ENCODE measurements at regions of chr19 and their contacts with region 1.

Region 1: GRCh38 chr19:1652471-1653299 is at the start of gene TCF3:
- DNase-seq: peak; percentile 99
- ATAC-seq: peak; percentile 94
- H3K4me3 Mint-ChIP-seq: peak within 1 kb of the TSS; percentile 88
- H3K27ac Mint-ChIP-seq: peak within 1 kb of the TSS; percentile 91
- H3K4me1 Mint-ChIP-seq: peaks cover 32% of the 10 kb centered on the region
- H3K27me3 Mint-ChIP-seq: no peaks in the 10 kb centered on the region
- total RNA-seq, gene TCF3: 115 to 133 TPM

Region 2: GRCh38 chr19:1355568-1356507 is 296.8 kb before region 1 on chr19:
- CTCF ChIA-PET with region 1: no interaction called
- POLR2A ChIA-PET with region 1: no interaction called
- intact Hi-C with region 1: loop called in 1 of 2 experiments (anchors 1 kb)
- DNase-seq: peak; percentile 51
- ATAC-seq: no peak
- H3K4me3 Mint-ChIP-seq: peak overlapping the region; percentile 77
- H3K27ac Mint-ChIP-seq: peak overlapping the region; percentile 49
- H3K4me1 Mint-ChIP-seq: peaks cover 9% of the 10 kb centered on the region
- H3K27me3 Mint-ChIP-seq: no peaks in the 10 kb centered on the region

Region 3: DNA sequence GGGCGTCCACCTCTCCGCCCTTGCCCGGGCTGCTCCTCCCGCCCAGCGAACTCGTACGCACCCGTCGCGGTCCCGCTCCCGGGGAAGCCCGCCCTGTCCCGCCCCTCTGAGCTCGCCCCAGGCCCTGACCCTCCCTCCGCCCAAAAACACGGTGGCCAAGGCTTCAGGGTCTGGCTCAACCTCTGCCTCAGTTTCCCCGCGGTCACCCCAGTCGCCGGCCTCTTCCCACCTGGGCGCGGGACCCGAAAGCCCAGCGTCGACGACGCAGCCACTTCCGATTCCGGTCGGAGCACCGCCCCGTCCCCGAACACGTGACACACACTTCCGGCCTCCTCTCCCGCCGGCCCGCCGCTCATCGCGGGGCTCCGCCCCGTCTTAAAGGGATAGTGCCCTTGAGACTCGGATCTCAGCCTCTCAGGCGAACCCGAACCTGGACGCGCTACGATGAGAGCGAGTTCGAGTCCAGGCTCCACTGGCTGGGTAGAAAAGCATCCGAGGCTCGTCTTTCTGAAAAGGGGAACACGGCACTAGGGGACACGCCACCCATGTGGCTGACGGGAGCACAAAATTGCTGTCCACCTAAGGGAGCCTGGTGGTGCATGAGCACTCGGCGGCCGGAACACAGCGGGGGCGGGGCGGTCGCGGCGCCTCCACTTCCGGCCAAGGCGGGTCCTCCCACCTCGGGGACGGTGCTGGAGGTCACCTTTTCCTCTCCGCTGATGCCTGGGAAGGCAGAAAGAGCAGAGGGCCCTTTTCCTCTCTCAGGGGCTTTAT is 173.6 kb before region 1 on chr19 and contains the start of gene C19orf25:
- CTCF ChIA-PET with region 1: no interaction called
- POLR2A ChIA-PET with region 1: no interaction called
- intact Hi-C with region 1: loop called in 1 of 2 experiments (anchors 1 kb)
- DNase-seq: peak; percentile 97
- ATAC-seq: peak; percentile 98
- H3K4me3 Mint-ChIP-seq: peak within 1 kb of the TSS; percentile 96
- H3K27ac Mint-ChIP-seq: peak within 1 kb of the TSS; percentile 95
- H3K4me1 Mint-ChIP-seq: peaks cover 6% of the 10 kb centered on the region
- H3K27me3 Mint-ChIP-seq: no peaks in the 10 kb centered on the region
- total RNA-seq, gene C19orf25: 19.9 to 26.9 TPM

Region 4: GRCh38 chr19:1592755-1593500 is 59.8 kb before region 1 on chr19 and contains the start of gene MBD3:
- CTCF ChIA-PET with region 1: no interaction called
- POLR2A ChIA-PET with region 1: interaction called, 7 read pairs
- intact Hi-C with region 1: loop called (anchors 1 to 5 kb)
- DNase-seq: peak; percentile 93
- ATAC-seq: peak; percentile 85
- H3K4me3 Mint-ChIP-seq: peak within 1 kb of the TSS; percentile 94
- H3K27ac Mint-ChIP-seq: peak within 1 kb of the TSS; percentile 93
- H3K4me1 Mint-ChIP-seq: peaks cover 20% of the 10 kb centered on the region
- H3K27me3 Mint-ChIP-seq: no peaks in the 10 kb centered on the region
- total RNA-seq, gene MBD3: 68.9 to 87.5 TPM

Region 5: GRCh38 chr19:1672038-1672768 is 19.5 kb after region 1 on chr19:
- CTCF ChIA-PET with region 1: interaction called, 6 read pairs
- POLR2A ChIA-PET with region 1: no interaction called
- intact Hi-C with region 1: loop called in 1 of 2 experiments (anchors 1 kb)
- DNase-seq: peak; percentile 78
- ATAC-seq: peak; percentile 64
- H3K4me3 Mint-ChIP-seq: no peak overlapping the region
- H3K27ac Mint-ChIP-seq: no peak overlapping the region
- H3K4me1 Mint-ChIP-seq: peaks cover 13% of the 10 kb centered on the region
- H3K27me3 Mint-ChIP-seq: peaks cover 46% of the 10 kb centered on the region

Region 6: DNA sequence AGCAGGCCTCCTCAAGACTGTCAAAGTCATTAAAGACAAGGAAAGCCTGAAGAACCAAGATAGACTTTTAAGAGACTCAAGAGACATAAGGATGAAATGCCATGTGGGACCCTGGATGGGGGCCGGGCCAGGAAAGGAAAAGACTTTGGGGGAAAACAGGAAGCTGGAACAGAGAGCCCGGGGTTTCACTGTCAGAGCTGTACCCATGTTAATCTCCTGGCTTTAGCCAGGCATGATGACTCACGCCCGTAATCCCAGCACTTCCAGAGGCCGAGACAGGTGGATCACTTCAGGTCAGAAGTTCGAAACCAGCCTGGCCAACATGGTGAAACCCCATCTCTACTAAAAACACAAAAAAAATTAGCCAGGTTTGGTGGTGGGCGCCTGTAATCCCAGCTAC is 216.3 kb after region 1 on chr19:
- CTCF ChIA-PET with region 1: no interaction called
- POLR2A ChIA-PET with region 1: no interaction called
- intact Hi-C with region 1: no loop called
- DNase-seq: no peak
- ATAC-seq: no peak
- H3K4me3 Mint-ChIP-seq: no peak overlapping the region
- H3K27ac Mint-ChIP-seq: peak overlapping the region; percentile 29
- H3K4me1 Mint-ChIP-seq: peaks cover 24% of the 10 kb centered on the region
- H3K27me3 Mint-ChIP-seq: no peaks in the 10 kb centered on the region

Region 7: DNA sequence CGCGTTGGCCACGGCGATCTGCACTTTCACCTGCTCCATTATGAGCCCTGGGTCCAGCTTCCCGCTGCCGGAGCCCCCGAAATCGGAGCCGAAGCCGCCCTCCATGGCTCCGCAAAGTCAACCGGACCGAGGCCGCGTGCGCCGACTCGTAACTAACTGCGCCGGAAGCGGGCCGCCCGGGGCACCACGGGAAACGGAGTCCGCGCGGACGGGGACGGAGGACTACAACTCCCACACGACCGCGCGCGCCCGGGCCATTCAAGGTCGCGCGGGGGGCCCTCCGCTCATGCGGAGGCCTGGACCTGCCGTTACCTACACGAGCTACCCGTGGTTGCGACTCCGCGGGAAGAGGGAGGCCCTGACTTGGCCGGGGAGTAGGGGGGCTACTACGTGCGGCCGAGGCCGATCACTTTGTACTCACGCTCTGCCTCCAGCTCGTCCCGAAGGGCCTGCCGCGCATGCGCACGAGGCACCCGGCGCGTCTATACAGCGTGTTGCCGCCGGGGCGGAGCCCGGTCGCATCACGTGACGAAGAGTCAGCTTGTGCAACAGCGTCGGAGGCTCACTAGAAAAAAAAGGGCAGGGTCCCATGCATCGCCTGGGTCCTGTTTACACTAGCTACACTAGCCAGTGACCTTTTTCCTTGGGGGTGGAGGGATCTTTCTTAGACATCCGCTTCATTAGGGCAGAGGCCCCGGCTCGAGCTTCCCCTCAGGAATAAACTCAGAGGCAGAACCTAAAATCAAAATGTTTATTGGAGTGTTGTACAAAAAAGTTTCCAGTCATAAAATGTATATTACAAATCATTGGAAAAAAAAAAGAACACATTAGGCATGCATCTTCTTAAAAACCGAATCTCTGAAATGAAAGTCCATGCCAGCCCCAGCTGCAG is 775.0 kb after region 1 on chr19 and contains the start of gene TIMM13:
- CTCF ChIA-PET with region 1: no interaction called
- POLR2A ChIA-PET with region 1: no interaction called
- intact Hi-C with region 1: loop called in 1 of 2 experiments (anchors 1 kb)
- DNase-seq: peak; percentile 98
- ATAC-seq: peak; percentile 95
- H3K4me3 Mint-ChIP-seq: peak within 1 kb of the TSS; percentile 86
- H3K27ac Mint-ChIP-seq: peak within 1 kb of the TSS; percentile 96
- H3K4me1 Mint-ChIP-seq: peaks cover 5% of the 10 kb centered on the region
- H3K27me3 Mint-ChIP-seq: no peaks in the 10 kb centered on the region
- total RNA-seq, gene TIMM13: 70.7 to 104 TPM

Measured in activated CD4-positive, alpha-beta T cell treated with anti-CD3 and anti-CD28 coated beads for 36 hours (primary cell).